ENCODE measurements at regions of chr6 and their contacts with region 1.

Region 1: GRCh38 chr6:89952686-89953085 is 58.4 kb downstream of the GJA10 start:
- DNase-seq: no peak
- H3K4me3 ChIP-seq: no peak overlapping the region
- H3K27ac ChIP-seq: no peak overlapping the region
- H3K4me1 ChIP-seq: no peaks in the 10 kb centered on the region
- H3K27me3 ChIP-seq: no peaks in the 10 kb centered on the region
- CTCF ChIP-seq: no peak
- EP300 ChIP-seq: no peak
- POLR2A ChIP-seq: no peak

Region 2: GRCh38 chr6:89887452-89888137 is 65.1 kb before region 1 on chr6:
- intact Hi-C with region 1: no loop called
- DNase-seq: no peak
- H3K4me3 ChIP-seq: no peak overlapping the region
- H3K27ac ChIP-seq: no peak overlapping the region
- H3K4me1 ChIP-seq: peaks cover 3% of the 10 kb centered on the region
- H3K27me3 ChIP-seq: no peaks in the 10 kb centered on the region
- CTCF ChIP-seq: no peak
- EP300 ChIP-seq: no peak
- POLR2A ChIP-seq: no peak

Region 3: GRCh38 chr6:90403489-90404381 is 451.0 kb after region 1 on chr6:
- intact Hi-C with region 1: loop called in 1 of 4 experiments (anchors 10 kb)
- DNase-seq: peak; percentile 45 to 77 (median 67)
- H3K4me3 ChIP-seq: no peak overlapping the region
- H3K27ac ChIP-seq: no peak overlapping the region
- H3K4me1 ChIP-seq: no peaks in the 10 kb centered on the region
- H3K27me3 ChIP-seq: no peaks in the 10 kb centered on the region
- CTCF ChIP-seq: no peak
- EP300 ChIP-seq: no peak
- POLR2A ChIP-seq: no peak